HAP-1 (cell line): ENCODE measurements at regions of chr7 and their contacts with region 1.

Region 1: GRCh38 chr7:104848138-104848990 is 165.6 kb upstream of the KMT2E start:
- DNase-seq: peak; percentile 41 to 83
- H3K4me3 ChIP-seq: no peak overlapping the region
- H3K4me1 ChIP-seq: no peaks in the 10 kb centered on the region
- H3K27me3 ChIP-seq: peaks cover 30% of the 10 kb centered on the region

Region 2: DNA sequence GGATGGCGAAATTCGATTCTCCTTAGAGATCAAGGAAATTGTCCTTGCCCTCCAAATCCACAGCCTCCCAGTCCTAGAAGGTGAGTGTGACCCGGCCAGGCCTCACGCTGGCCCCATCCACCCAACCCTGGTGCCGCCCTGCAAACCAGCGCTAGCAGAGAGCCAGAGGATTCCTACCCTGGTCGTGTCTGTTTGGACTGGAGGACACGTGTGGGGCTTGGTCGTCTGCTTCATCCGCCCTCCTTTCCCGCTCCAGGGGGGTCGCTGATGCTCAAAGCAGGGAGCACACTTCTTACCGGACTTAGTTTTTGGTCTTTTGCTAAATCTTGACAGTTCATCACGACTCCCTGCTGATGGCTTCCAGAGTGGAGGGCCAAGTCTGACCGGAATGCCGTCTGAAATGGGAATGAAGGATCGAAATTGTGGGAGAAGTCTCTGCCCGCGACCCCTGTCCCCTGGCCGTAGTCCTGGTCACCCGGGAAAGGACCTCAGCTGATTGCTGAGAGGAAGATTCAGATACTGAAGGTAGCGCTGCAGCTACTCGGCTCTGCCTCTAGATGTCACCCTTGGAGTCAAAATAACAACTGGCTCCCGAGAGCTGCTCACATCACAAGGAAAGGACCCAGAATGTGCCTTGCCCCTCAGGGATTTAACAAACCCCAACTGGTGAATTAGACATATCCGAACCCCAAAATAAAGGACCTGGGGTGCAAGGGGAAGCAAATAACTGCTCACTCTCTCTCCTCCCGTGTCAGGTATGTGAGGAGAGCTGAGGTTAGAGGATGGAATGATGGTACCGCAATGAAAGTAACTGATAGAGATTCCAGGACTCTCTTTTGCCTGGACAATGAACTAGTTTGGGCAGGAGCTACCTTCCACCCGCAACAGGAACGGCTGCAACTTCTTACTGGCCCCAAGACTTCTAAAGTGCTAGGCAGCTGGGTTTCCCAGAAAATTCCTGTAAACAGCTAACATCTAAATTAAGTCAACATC is 617.0 kb before region 1 on chr7:
- in situ Hi-C with region 1: loop called (anchors 25 kb)
- DNase-seq: peak; percentile 63 to 68
- H3K4me3 ChIP-seq: no peak overlapping the region
- H3K4me1 ChIP-seq: no peaks in the 10 kb centered on the region
- H3K27me3 ChIP-seq: peaks cover 5% of the 10 kb centered on the region